Cardiac septum (tissue), 1 donor: ENCODE measurements at regions of chr11 and their contacts with region 1.

Region 1: GRCh38 chr11:16605894-16606783 is 132.3 kb upstream of the C11orf58 start:
- DNase-seq: peak; percentile 93

Region 2: GRCh38 chr11:16191212-16191867 is 414.8 kb before region 1 on chr11:
- intact Hi-C with region 1: loop called (anchors 2 kb)
- DNase-seq: no peak

Region 3: GRCh38 chr11:16293204-16293681 is 312.9 kb before region 1 on chr11:
- intact Hi-C with region 1: loop called (anchors 2 kb)
- DNase-seq: no peak

Region 4: DNA sequence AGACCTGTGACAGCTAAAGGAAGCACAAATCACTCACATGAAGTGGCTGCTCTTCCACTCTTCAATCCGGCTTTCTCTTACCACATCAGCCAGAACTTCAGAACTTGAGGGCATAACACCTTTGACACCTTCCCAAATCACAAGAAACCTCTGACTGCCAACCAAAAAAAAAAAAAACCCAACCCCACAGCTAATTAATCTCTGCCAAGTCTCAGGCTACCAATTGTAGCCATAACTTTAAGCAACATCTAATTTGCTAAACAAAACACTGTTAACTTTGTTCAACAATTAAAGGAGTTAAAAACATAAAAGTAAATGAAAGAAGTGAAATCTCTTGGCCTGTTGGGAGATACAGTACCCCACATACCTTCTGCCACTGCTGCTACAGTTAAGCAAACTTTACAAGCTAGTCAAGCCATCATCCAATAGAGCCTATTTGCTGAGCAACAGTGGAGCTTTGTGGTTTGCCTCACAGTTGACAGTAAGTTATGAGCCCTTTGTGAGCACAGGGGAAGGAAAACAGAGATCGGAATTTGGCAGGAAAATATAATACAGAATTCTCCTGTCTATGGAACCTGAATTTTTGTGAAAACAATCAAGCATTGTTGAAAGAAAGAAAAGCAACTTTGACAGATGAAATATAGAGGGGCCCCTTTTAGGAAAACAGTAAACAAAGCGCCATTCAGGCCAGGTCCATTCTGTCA is 249.9 kb before region 1 on chr11 and contains the start of gene SOX6:
- intact Hi-C with region 1: loop called (anchors 5 kb)
- DNase-seq: no peak
- total RNA-seq, gene SOX6: 34.6 TPM

Region 5: GRCh38 chr11:16632295-16633200 is 26.4 kb after region 1 on chr11:
- intact Hi-C with region 1: no loop called
- DNase-seq: no peak